ENCODE measurements at regions of chr1 and their contacts with region 1.

Region 1: DNA sequence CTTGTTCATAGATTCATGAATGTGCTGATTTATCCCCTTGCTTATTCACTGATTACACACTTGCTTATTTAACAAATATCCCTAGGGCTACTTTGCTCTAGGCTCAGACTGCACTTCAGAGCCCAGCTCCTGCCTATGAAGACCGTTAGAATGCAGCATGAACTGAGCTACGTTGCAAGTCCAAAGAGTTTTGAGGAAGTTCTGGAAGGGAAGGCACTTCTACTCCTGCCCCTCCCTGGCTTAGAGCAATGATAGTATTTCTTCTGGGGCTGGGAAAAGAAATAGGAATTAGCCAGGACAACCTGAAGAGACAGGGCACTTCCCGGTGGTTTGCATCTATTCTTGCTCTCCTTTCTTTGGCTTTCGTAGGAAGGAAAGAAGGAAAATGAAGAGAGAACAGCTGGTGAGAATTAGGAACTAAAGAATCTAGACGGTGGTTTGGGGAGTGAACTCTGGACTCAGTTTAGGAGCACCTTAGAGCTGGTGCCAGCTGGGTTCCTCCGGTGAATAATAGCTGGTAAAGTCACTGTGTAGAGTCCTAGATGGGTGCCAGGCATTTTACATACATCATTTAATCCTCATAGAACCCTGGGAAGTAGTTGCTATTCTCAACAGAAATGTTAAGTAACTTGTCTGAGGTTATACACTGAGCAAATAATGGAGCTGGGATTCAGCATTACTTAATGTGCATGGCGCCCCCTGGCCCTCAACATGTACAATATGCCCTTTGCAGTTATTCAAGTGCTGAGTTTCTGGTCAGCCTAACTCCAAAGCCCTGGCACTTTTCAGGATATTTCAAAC is 65.9 kb downstream of the NDUFS5 start:
- DNase-seq: peak; percentile 77
- ATAC-seq: peak; percentile 82
- H3K4me3 Mint-ChIP-seq: no peak overlapping the region
- H3K27ac Mint-ChIP-seq: no peak overlapping the region
- H3K4me1 Mint-ChIP-seq: peaks cover 2% of the 10 kb centered on the region
- H3K27me3 Mint-ChIP-seq: peaks cover 7% of the 10 kb centered on the region

Region 2: DNA sequence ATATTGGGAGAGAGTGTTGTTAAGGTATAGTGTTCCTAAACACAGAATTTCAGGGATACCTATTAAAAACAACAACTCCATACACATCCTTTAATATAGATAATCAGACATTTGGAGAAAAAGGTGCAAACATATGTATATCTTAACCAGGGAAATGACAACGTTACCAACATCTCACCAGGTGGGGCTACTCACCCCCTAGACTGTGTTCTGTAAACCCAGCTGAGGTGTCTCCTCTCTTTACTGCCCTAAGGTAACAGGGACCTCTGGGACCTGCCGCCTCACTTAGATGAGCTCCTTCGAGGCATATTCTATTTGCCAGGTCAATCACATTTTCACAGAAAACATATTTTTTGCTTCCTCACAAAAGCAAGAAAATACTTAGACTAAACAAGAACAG is 245.8 kb before region 1 on chr1:
- CTCF ChIA-PET with region 1: interaction called, 11 read pairs
- POLR2A ChIA-PET with region 1: no interaction called
- DNase-seq: no peak
- ATAC-seq: no peak
- H3K4me3 Mint-ChIP-seq: no peak overlapping the region
- H3K27ac Mint-ChIP-seq: no peak overlapping the region
- H3K4me1 Mint-ChIP-seq: no peaks in the 10 kb centered on the region
- H3K27me3 Mint-ChIP-seq: no peaks in the 10 kb centered on the region

Region 3: GRCh38 chr1:39026051-39026865 is 65.8 kb before region 1 on chr1 and contains the start of gene NDUFS5:
- CTCF ChIA-PET with region 1: interaction called, 10 read pairs
- POLR2A ChIA-PET with region 1: no interaction called
- DNase-seq: peak; percentile 89
- ATAC-seq: peak; percentile 93
- H3K4me3 Mint-ChIP-seq: peak within 1 kb of the TSS; percentile 98
- H3K27ac Mint-ChIP-seq: peak within 1 kb of the TSS; percentile 94
- H3K4me1 Mint-ChIP-seq: peaks cover 15% of the 10 kb centered on the region
- H3K27me3 Mint-ChIP-seq: peaks cover 2% of the 10 kb centered on the region
- total RNA-seq, gene NDUFS5: 134 to 138 TPM

Region 4: DNA sequence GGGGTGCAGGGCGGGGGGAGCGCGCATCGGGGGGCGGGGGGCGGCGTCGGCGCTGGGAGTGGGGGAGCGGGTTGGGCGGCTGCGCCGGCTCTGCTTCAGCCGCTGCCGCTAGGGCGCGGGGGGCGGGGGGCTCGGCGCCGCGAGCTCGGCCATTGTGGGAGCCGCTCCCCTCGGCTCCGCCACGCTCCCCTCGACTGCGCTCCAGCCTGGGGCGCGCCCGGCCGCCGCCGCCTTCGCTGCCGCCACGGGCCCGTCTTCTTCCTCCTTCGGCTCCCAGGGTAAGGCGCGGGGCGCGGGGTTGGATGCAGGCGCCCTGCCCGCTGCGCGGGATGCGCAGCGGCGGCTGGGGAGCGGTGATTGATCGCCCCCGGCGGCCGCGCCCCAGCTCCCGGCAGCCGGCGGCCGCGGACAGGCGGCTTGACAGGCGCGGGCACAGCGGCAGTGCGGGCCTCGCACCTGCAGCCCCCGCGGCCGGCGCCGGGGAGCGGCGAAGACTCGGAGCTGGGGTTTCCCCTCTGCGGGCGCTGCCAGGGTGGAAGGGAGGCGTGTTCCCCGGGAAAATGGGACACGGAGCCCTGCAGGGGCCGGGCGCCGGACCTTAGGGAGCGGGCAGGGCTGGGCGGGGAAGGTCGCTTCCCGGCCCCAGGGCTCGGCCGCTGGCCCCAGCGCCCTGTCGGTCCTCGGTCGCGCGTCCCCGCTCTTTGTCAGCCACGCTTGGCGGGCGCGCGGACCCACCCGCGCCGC is 10.6 kb before region 1 on chr1:
- CTCF ChIA-PET with region 1: interaction called, 20 read pairs
- POLR2A ChIA-PET with region 1: no interaction called
- DNase-seq: peak; percentile 30
- ATAC-seq: peak; percentile 84
- H3K4me3 Mint-ChIP-seq: no peak overlapping the region
- H3K27ac Mint-ChIP-seq: no peak overlapping the region
- H3K4me1 Mint-ChIP-seq: peaks cover 5% of the 10 kb centered on the region
- H3K27me3 Mint-ChIP-seq: peaks cover 44% of the 10 kb centered on the region

Measured in activated CD8-positive, alpha-beta T cell treated with anti-CD3 and anti-CD28 coated beads, Interleukin-2, amount 10 ng/mL, durations not matched to agents 7 days and 5 days (primary cell).